GM10248 (cell line): ENCODE measurements at regions of chr7 and their contacts with region 1.

Region 1: DNA sequence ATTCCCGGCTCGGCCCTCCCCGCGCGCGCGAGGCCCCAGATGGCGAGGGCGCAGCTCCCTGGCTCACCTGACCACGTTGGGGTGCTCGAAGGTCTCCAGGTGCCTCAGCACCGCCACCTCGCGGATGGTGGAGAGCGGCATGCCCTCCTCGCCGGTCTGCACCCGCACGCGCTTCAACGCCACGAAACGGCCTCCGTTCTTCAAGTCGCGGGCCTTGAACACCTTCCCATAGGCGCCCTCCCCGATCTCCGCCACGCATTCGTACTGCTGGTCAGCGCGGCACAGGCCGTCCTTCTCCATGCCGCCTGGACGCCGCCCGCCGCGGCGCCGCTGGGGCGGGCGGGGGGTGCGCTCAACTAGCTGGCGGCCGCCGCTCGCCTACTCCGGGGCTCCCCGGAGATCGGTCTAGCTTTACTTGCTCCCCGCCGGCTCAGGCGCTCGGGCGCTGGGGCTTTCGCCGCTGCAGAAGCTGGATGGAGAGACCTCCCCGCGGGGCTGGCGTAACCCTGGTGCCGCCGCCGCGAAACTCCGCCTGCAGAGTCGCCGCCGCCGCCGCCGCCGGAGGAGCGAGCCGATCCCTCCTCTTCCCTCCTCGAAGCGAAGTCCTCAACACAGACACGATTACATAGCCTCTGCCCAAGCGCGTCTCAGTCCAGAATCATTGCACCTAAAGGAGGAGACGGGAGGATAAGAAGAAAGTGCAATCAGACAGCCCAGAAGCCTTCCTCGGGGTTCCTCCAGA is 3.2 kb downstream of the CDK6 start:
- DNase-seq: peak; percentile 80
- CTCF ChIP-seq: peak; percentile 89

Region 2: DNA sequence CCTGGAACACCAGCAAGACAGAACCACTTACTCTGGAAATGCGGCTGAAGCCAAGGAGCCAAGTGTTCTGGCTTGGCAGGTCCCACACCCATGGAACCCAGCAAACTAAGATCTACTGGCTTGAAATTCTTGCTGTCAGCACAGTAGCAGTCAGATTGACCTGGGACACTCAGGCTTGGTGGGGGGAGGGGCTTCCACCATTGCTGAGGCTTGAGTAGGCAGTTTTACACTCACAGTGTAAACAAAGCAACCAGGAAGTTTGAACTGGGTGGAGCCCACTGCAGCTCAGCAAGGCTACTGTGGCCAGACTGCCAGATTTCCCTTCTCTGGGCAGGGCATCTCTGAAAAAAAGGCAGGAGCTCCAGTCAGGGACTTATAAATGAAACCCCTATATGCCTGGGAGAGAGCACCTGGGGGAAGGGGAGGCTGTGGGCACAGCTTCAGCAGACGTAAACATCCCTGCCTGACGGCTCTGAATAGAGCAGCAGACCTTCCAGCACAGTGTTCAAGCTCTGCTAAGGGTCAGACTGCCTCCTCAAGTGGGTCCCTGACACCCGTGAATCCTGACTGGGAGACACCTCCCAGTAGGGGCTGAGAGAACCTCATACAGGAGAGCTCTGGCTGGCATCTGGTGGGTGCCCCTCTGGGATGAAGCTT is 1073.9 kb before region 1 on chr7:
- CTCF ChIA-PET with region 1: no interaction called
- POLR2A ChIA-PET with region 1: no interaction called
- DNase-seq: no peak
- CTCF ChIP-seq: no peak

Region 3: DNA sequence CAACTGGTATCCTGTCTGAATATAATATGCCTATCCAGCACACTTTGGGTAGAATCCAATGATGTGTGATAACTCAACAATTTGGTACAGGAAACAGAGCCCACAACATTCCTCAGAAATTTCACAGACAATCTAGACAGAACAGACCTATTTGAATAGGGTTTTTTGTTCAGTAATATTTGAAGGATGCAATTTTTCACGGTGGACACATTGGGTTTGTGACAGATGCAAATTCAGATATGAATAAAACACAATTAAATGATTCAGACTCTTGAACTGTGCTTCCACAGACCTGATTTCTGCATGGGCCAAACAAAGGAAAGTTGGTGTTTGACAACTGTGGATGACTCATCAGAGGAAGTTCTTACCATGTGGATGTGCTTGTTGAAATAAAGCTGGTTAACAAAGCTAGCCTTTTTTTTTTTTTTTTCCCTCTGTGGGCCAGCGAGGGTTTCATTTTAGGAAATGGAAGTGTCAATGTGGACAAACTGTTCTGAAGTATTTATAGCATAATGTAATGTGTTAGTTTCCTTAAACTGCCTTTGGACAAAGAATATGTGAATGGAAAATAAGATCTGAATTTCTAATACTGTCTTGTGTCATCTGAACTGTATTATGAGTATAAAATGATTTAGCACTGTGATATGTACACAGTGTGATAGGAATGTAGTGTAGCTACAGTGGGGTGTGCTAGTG is 199.8 kb before region 1 on chr7:
- CTCF ChIA-PET with region 1: interaction called, 13 read pairs
- POLR2A ChIA-PET with region 1: no interaction called
- DNase-seq: no peak
- CTCF ChIP-seq: no peak

Region 4: GRCh38 chr7:92691578-92691977 is 141.6 kb before region 1 on chr7:
- CTCF ChIA-PET with region 1: interaction called, 13 read pairs
- POLR2A ChIA-PET with region 1: no interaction called
- DNase-seq: peak; percentile 44
- CTCF ChIP-seq: peak; percentile 53

Region 5: GRCh38 chr7:92717993-92718716 is 115.0 kb before region 1 on chr7:
- CTCF ChIA-PET with region 1: interaction called, 32 read pairs
- POLR2A ChIA-PET with region 1: no interaction called
- DNase-seq: peak; percentile 34
- CTCF ChIP-seq: no peak

Region 6: GRCh38 chr7:92809397-92810241 is 23.6 kb before region 1 on chr7:
- CTCF ChIA-PET with region 1: interaction called, 24 read pairs
- POLR2A ChIA-PET with region 1: interaction called, 3 read pairs
- DNase-seq: peak; percentile 57
- CTCF ChIP-seq: no peak

Region 7: GRCh38 chr7:92823042-92823441 is 10.2 kb before region 1 on chr7:
- CTCF ChIA-PET with region 1: interaction called, 28 read pairs
- POLR2A ChIA-PET with region 1: interaction called, 5 read pairs
- DNase-seq: no peak
- CTCF ChIP-seq: no peak

Region 8: GRCh38 chr7:92898798-92899197 is 65.6 kb after region 1 on chr7:
- CTCF ChIA-PET with region 1: no interaction called
- POLR2A ChIA-PET with region 1: no interaction called
- DNase-seq: no peak
- CTCF ChIP-seq: no peak